ENCODE measurements at regions of chr15 and their contacts with region 1.

Region 1: GRCh38 chr15:55897560-55898336 is 95.7 kb downstream of the NEDD4 start:
- DNase-seq: peak; percentile 67
- H3K4me3 ChIP-seq: peak overlapping the region in 1 of 3 experiments; percentile 23
- H3K27ac ChIP-seq: peak overlapping the region; percentile 96
- H3K4me1 ChIP-seq: peaks cover 38% of the 10 kb centered on the region
- H3K27me3 ChIP-seq: no peaks in the 10 kb centered on the region
- CTCF ChIP-seq: peak; percentile 67 to 76
- POLR2A ChIP-seq: no peak

Region 2: GRCh38 chr15:55588070-55588814 is 309.5 kb before region 1 on chr15 and contains the start of gene PYGO1:
- CTCF ChIA-PET with region 1: no interaction called
- POLR2A ChIA-PET with region 1: no interaction called
- dilution Hi-C with region 1: no loop called
- intact Hi-C with region 1: loop called (anchors 1 kb)
- DNase-seq: peak; percentile 70
- H3K4me3 ChIP-seq: peak within 1 kb of the TSS; percentile 44 to 80 (median 68)
- H3K27ac ChIP-seq: peak within 1 kb of the TSS; percentile 13
- H3K4me1 ChIP-seq: peaks cover 8% of the 10 kb centered on the region
- H3K27me3 ChIP-seq: no peaks in the 10 kb centered on the region
- CTCF ChIP-seq: no peak
- POLR2A ChIP-seq: no peak
- total RNA-seq, gene PYGO1: 5.7 and 7.6 TPM in 2 replicates

Region 3: GRCh38 chr15:55742927-55743728 is 154.6 kb before region 1 on chr15 and contains the start of gene PRTG:
- CTCF ChIA-PET with region 1: interaction called, 3 read pairs
- POLR2A ChIA-PET with region 1: no interaction called
- dilution Hi-C with region 1: no loop called
- intact Hi-C with region 1: loop called (anchors 5 kb)
- DNase-seq: peak; percentile 81
- H3K4me3 ChIP-seq: peak within 1 kb of the TSS; percentile 26 to 98 (median 93)
- H3K27ac ChIP-seq: peak within 1 kb of the TSS; percentile 4
- H3K4me1 ChIP-seq: peaks cover 17% of the 10 kb centered on the region
- H3K27me3 ChIP-seq: no peaks in the 10 kb centered on the region
- CTCF ChIP-seq: no peak
- POLR2A ChIP-seq: peak; percentile 46
- total RNA-seq, gene PRTG: 8.2 and 12.4 TPM in 2 replicates

Region 4: GRCh38 chr15:55873024-55873745 is 24.6 kb before region 1 on chr15:
- CTCF ChIA-PET with region 1: interaction called, 13 read pairs
- POLR2A ChIA-PET with region 1: no interaction called
- dilution Hi-C with region 1: no loop called
- intact Hi-C with region 1: no loop called
- DNase-seq: peak; percentile 84
- H3K4me3 ChIP-seq: peak overlapping the region; percentile 10 to 78 (median 16)
- H3K27ac ChIP-seq: peak overlapping the region; percentile 89
- H3K4me1 ChIP-seq: peaks cover 23% of the 10 kb centered on the region
- H3K27me3 ChIP-seq: no peaks in the 10 kb centered on the region
- CTCF ChIP-seq: no peak
- POLR2A ChIP-seq: peak; percentile 47

Region 5: GRCh38 chr15:55907797-55908196 is 10.0 kb after region 1 on chr15:
- CTCF ChIA-PET with region 1: interaction called, 109 read pairs
- POLR2A ChIA-PET with region 1: no interaction called
- dilution Hi-C with region 1: no loop called
- intact Hi-C with region 1: no loop called
- DNase-seq: peak; percentile 76
- H3K4me3 ChIP-seq: no peak overlapping the region
- H3K27ac ChIP-seq: peak overlapping the region; percentile 41
- H3K4me1 ChIP-seq: peaks cover 14% of the 10 kb centered on the region
- H3K27me3 ChIP-seq: no peaks in the 10 kb centered on the region
- CTCF ChIP-seq: no peak
- POLR2A ChIP-seq: no peak

Region 6: GRCh38 chr15:55993111-55993803 is 95.5 kb after region 1 on chr15 and contains the start of gene NEDD4:
- CTCF ChIA-PET with region 1: interaction called, 5 read pairs
- POLR2A ChIA-PET with region 1: no interaction called
- dilution Hi-C with region 1: no loop called
- intact Hi-C with region 1: loop called (anchors 1 kb)
- DNase-seq: peak; percentile 92
- H3K4me3 ChIP-seq: peak within 1 kb of the TSS; percentile 79 to 97 (median 93)
- H3K27ac ChIP-seq: peak within 1 kb of the TSS; percentile 68
- H3K4me1 ChIP-seq: peaks cover 20% of the 10 kb centered on the region
- H3K27me3 ChIP-seq: no peaks in the 10 kb centered on the region
- CTCF ChIP-seq: peak; percentile 35 to 76
- POLR2A ChIP-seq: peak; percentile 75
- total RNA-seq, gene NEDD4: 34.2 and 39.0 TPM in 2 replicates

Region 7: GRCh38 chr15:56052395-56053045 is 154.8 kb after region 1 on chr15:
- CTCF ChIA-PET with region 1: interaction called, 6 read pairs
- POLR2A ChIA-PET with region 1: no interaction called
- dilution Hi-C with region 1: no loop called
- intact Hi-C with region 1: loop called (anchors 5 kb)
- DNase-seq: peak; percentile 56
- H3K4me3 ChIP-seq: no peak overlapping the region
- H3K27ac ChIP-seq: no peak overlapping the region
- H3K4me1 ChIP-seq: peaks cover 3% of the 10 kb centered on the region
- H3K27me3 ChIP-seq: no peaks in the 10 kb centered on the region
- CTCF ChIP-seq: peak; percentile 40 to 60
- POLR2A ChIP-seq: no peak

Measured in endothelial cell of umbilical vein (primary cell).